ENCODE measurements at regions of chr5 and their contacts with region 1.

Region 1: GRCh38 chr5:131706281-131706680 is 71.3 kb upstream of the RAPGEF6 start:
- DNase-seq: no peak
- ATAC-seq: no peak
- H3K4me3 ChIP-seq: no peak overlapping the region
- H3K4me3 Mint-ChIP-seq: no peak overlapping the region
- H3K27ac ChIP-seq: no peak overlapping the region
- H3K27ac Mint-ChIP-seq: no peak overlapping the region
- H3K4me1 ChIP-seq: no peaks in the 10 kb centered on the region
- H3K4me1 Mint-ChIP-seq: peaks cover 3% of the 10 kb centered on the region
- H3K27me3 ChIP-seq: no peaks in the 10 kb centered on the region
- H3K27me3 Mint-ChIP-seq: no peaks in the 10 kb centered on the region
- CTCF ChIP-seq: no peak

Region 2: DNA sequence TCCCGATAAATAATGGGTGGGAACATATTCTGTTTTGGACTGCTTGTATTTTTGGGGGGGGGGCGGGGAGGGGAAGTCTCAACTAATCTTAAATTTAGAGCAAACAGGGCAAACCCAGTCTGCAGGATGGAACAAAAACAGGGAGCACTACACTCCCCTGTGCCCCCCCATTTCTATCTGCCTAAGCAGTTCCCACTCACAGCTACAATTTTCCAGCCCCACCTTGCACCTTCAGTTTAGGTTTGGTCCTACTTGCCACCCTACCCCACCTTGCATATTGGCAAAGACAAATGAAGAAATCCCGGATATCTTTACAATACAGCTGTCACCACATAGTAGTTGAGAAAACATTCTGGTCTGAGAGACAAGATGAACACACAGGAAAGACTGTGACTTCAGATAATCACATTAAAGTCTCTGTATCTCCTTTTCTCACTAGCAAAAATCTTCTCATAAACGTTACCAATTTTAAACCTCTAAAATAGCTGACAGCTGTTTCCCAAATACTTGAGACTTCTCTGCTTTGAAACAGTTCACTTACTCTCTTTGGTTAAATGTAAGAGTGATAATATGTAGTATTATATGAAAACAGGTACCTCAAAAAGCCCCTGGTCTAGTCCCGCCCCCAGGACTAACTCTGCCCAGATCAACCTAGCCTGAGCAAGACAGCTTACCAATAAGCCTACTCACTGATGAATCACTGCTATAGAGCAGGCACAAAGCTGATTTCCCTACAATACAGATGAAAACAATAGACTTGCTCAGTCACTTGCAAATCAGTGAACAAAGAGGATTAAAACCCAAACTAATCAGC is 66.0 kb before region 1 on chr5:
- CTCF ChIA-PET with region 1: no interaction called
- POLR2A ChIA-PET with region 1: no interaction called
- intact Hi-C with region 1: loop called in 1 of 2 experiments (anchors 10 kb)
- DNase-seq: peak in 7 of 9 experiments; percentile 18 to 72 (median 57)
- ATAC-seq: peak; percentile 82
- H3K4me3 ChIP-seq: no peak overlapping the region
- H3K4me3 Mint-ChIP-seq: peak overlapping the region; percentile 62
- H3K27ac ChIP-seq: peak overlapping the region; percentile 27 to 31
- H3K27ac Mint-ChIP-seq: peak overlapping the region; percentile 94
- H3K4me1 ChIP-seq: peaks cover 35% of the 10 kb centered on the region
- H3K4me1 Mint-ChIP-seq: peaks cover 30% of the 10 kb centered on the region
- H3K27me3 ChIP-seq: no peaks in the 10 kb centered on the region
- H3K27me3 Mint-ChIP-seq: no peaks in the 10 kb centered on the region
- CTCF ChIP-seq: no peak